ENCODE measurements at regions of chr11 and their contacts with region 1.

Region 1: GRCh38 chr11:130513132-130513531 is 64.7 kb downstream of the ADAMTS15 start:
- DNase-seq: peak; percentile 61 to 86 (median 73)
- ATAC-seq: peak; percentile 76 to 94 (median 92)
- H3K4me3 ChIP-seq: no peak overlapping the region
- H3K27ac ChIP-seq: peak overlapping the region in 9 of 12 donors; percentile 18 to 69 (median 46)
- H3K4me1 ChIP-seq: peaks cover 0 to 41% (median 21%) of the 10 kb centered on the region in 12 donors
- H3K27me3 ChIP-seq: no peaks in the 10 kb centered on the region
- CTCF ChIP-seq: no peak
- POLR2A ChIP-seq: no peak

Region 2: GRCh38 chr11:130403271-130403804 is 109.8 kb before region 1 on chr11:
- intact Hi-C with region 1: no loop called
- DNase-seq: peak; percentile 59 to 83 (median 74)
- ATAC-seq: peak; percentile 62 to 81 (median 76)
- H3K4me3 ChIP-seq: no peak overlapping the region
- H3K27ac ChIP-seq: peak overlapping the region in 11 of 12 donors; percentile 4 to 80 (median 56)
- H3K4me1 ChIP-seq: peaks cover 0 to 48% (median 21%) of the 10 kb centered on the region in 12 donors
- H3K27me3 ChIP-seq: no peaks in the 10 kb centered on the region
- CTCF ChIP-seq: no peak
- POLR2A ChIP-seq: no peak

Region 3: DNA sequence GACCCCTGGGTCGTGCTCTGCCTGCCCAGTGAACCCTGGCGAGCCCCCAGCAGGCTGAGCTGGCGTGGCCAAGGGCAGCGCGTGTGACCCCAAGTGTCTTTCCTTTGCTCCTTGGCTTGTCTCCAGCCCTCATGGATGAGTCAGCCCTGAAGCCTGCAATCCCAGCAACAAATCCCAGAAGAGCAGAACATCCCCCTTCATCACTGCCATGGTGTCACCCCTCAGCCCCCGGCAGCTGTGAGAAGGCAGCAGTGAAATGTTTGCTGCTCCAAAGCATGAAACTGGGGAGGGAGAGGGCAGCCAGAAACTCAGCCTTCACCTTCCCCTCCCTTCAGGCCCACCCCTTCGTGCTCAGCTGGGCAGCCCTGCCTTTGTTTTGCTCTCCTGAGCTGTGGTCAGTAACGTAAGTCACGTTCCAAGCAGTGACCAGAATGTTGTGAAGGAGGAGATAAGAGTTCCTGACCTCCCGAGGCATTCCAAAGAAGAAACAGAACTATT is 34.9 kb before region 1 on chr11:
- intact Hi-C with region 1: loop called in 3 of 10 experiments (anchors 5 kb)
- DNase-seq: peak; percentile 78 to 92 (median 86)
- ATAC-seq: peak; percentile 54 to 82 (median 75)
- H3K4me3 ChIP-seq: no peak overlapping the region
- H3K27ac ChIP-seq: peak overlapping the region; percentile 73 to 88 (median 84)
- H3K4me1 ChIP-seq: peaks cover 11 to 57% (median 47%) of the 10 kb centered on the region in 12 donors
- H3K27me3 ChIP-seq: no peaks in the 10 kb centered on the region
- CTCF ChIP-seq: no peak
- POLR2A ChIP-seq: no peak

Region 4: GRCh38 chr11:130671801-130672700 is 158.9 kb after region 1 on chr11:
- intact Hi-C with region 1: loop called in 1 of 10 experiments (anchors 10 kb)
- DNase-seq: peak; percentile 59 to 87 (median 74)
- ATAC-seq: peak; percentile 66 to 79 (median 76)
- H3K4me3 ChIP-seq: no peak overlapping the region
- H3K27ac ChIP-seq: peak overlapping the region in 10 of 12 donors; percentile 12 to 86 (median 36)
- H3K4me1 ChIP-seq: peaks cover 0 to 50% (median 36%) of the 10 kb centered on the region in 12 donors
- H3K27me3 ChIP-seq: no peaks in the 10 kb centered on the region
- CTCF ChIP-seq: no peak
- POLR2A ChIP-seq: no peak

Region 5: GRCh38 chr11:130727157-130728119 is 214.3 kb after region 1 on chr11:
- intact Hi-C with region 1: no loop called
- DNase-seq: no peak
- ATAC-seq: peak in 3 of 4 donors; percentile 7 to 35 (median 12)
- H3K4me3 ChIP-seq: no peak overlapping the region
- H3K27ac ChIP-seq: peak overlapping the region in 6 of 12 donors; percentile 3 to 75 (median 10)
- H3K4me1 ChIP-seq: peaks cover 5 to 35% (median 25%) of the 10 kb centered on the region in 12 donors
- H3K27me3 ChIP-seq: no peaks in the 10 kb centered on the region
- CTCF ChIP-seq: no peak
- POLR2A ChIP-seq: no peak

Region 6: DNA sequence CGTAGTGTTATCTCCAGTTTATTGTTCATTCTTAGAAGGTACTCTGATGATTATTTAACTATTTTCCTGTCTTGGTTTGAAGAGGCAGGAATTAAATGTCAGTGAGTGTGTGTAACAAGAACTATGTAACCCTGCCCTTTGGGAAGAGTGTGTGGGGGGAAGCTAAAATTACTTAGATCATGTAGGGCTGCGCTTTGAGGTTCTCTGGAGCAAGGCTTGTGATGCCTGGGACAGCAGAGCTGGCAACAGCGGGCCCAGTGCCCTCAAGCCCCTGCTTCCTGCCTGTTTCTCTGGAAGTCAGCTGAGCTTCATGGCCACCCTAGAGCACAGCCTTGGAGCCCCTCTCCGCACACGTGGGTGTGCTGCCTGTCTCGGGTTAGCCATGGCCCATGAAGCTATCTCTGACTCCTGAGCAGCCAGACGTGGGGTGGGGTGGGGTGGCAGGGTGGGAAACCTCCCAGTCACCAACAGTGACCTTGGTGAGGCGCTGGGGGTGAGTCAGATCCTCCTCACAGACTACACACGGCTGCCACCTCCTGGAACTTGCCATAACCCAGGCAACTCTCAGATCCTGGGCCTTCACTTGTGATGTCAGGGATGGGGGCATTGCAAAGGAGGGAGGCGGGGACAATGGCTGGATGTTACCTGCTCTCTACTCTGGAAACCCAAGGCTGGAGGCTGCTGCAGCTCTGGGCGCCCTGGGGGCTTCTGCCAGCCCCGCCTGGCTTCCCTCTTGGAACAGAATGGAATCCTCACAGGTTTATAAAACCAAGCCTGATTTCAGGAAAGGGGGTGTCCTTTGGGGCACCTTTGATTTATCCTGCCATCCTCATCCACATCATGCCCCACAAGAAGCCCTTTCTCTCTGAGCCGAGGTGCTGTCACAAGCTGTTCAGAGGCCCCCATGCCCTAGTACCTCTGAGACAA is 314.6 kb after region 1 on chr11:
- intact Hi-C with region 1: loop called in 1 of 10 experiments (anchors 5 kb)
- DNase-seq: peak in 4 of 5 donors; percentile 63 to 86 (median 79)
- ATAC-seq: peak; percentile 83 to 94 (median 91)
- H3K4me3 ChIP-seq: no peak overlapping the region
- H3K27ac ChIP-seq: peak overlapping the region in 10 of 12 donors; percentile 24 to 73 (median 58)
- H3K4me1 ChIP-seq: peaks cover 0 to 42% (median 25%) of the 10 kb centered on the region in 12 donors
- H3K27me3 ChIP-seq: no peaks in the 10 kb centered on the region
- CTCF ChIP-seq: peak; percentile 13 to 62 (median 48)
- POLR2A ChIP-seq: no peak

Measured in heart left ventricle (tissue), 16 donors.